ENCODE measurements at regions of chr16 and their contacts with region 1.

Region 1: GRCh38 chr16:66406534-66407221 is 20.4 kb upstream of the BEAN1 start:
- DNase-seq: peak; percentile 90
- H3K4me3 ChIP-seq: peak overlapping the region; percentile 77 to 82
- H3K27ac ChIP-seq: peak overlapping the region; percentile 56 to 60
- H3K4me1 ChIP-seq: peaks cover 6 to 15% of the 10 kb centered on the region in 2 experiments; a peak in 3 of 4 replicates
- H3K27me3 ChIP-seq: no peaks in the 10 kb centered on the region
- CTCF ChIP-seq: peak; percentile 84
- EP300 ChIP-seq: no peak
- RAD21 ChIP-seq: peak; percentile 93

Region 2: GRCh38 chr16:66391726-66392670 is 14.7 kb before region 1 on chr16:
- CTCF ChIA-PET with region 1: interaction called, 12 read pairs
- POLR2A ChIA-PET with region 1: no interaction called
- DNase-seq: no peak
- H3K4me3 ChIP-seq: no peak overlapping the region
- H3K27ac ChIP-seq: no peak overlapping the region
- H3K4me1 ChIP-seq: no peaks in the 10 kb centered on the region
- H3K27me3 ChIP-seq: no peaks in the 10 kb centered on the region
- CTCF ChIP-seq: no peak
- EP300 ChIP-seq: no peak
- RAD21 ChIP-seq: no peak

Region 3: DNA sequence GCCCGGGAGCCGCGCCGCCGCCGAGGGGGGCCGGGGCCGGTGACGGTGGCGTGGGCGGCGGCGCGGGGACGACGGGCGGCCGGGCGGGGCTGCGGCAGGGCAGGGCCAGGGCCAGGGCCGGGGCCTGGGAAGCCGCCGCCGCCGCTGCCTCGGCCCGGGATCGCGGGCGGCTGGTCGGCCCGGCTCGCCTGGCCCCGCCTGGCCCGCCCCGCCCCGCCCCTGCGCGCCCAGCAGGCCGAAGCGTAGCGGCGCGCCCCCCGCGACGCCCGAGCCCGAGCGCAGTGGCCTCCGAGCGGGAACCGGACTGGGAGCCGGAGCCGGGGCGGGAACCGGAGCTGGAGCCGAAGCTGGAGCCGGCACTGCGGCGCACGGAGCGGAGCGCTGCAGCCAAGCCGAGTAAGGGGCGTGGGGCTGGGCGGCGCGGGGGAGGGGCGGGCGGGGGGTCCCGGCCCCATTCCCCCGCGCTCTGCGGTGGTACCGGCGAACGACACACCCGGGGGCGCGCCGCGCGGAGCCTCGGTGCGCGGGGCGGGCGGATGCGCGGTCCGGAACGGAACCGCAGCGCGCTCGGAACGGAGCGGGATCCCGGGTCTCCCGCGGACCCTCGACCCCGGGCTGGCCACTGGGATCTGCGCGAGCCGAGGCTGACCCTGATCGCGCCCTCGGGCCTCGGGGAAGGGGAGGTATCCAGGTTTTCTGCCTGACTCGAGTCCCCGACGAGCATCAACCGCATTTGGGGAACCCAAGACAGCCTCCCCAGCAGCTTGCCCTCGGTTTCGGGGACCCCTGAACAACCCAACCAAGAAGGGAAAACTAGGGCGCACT is 20.6 kb after region 1 on chr16 and contains the start of gene BEAN1:
- CTCF ChIA-PET with region 1: interaction called, 28 read pairs
- POLR2A ChIA-PET with region 1: no interaction called
- DNase-seq: peak; percentile 86
- H3K4me3 ChIP-seq: peak within 1 kb of the TSS; percentile 40 to 48
- H3K27ac ChIP-seq: no peak within 1 kb of the TSS
- H3K4me1 ChIP-seq: peaks cover 0 to 11% of the 10 kb centered on the region in 2 experiments; a peak in 1 of 4 replicates
- H3K27me3 ChIP-seq: peaks cover 50% of the 10 kb centered on the region
- CTCF ChIP-seq: no peak
- EP300 ChIP-seq: no peak
- RAD21 ChIP-seq: no peak
- polyA plus RNA-seq, gene BEAN1: 0.07 TPM in 1 of 2 replicates, not detected in the other

Region 4: DNA sequence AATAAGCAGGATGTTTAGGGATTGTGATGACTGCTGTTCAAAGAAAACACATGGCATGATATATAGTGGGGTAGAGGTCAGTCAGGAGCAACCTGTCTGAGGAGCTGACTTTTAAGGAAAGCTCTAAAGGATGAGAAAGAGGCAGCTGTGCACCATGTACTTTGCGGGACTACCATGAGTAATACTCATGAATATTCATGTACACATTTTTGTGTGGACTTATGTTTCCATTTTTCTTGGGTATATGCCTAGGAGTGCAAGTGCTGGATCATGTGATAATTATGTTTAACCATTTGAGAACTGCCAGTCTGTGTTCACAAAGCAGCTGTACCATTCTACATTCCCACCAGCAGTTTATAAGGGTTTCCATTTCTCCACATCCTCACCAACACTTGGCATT is 56.2 kb after region 1 on chr16:
- CTCF ChIA-PET with region 1: interaction called, 299 read pairs
- POLR2A ChIA-PET with region 1: no interaction called
- DNase-seq: no peak
- H3K4me3 ChIP-seq: no peak overlapping the region
- H3K27ac ChIP-seq: no peak overlapping the region
- H3K4me1 ChIP-seq: no peaks in the 10 kb centered on the region; a peak in 1 of 4 replicates
- H3K27me3 ChIP-seq: peaks cover 12% of the 10 kb centered on the region; the same call in 1 of the 2 replicates
- CTCF ChIP-seq: no peak
- EP300 ChIP-seq: no peak
- RAD21 ChIP-seq: no peak

Region 5: DNA sequence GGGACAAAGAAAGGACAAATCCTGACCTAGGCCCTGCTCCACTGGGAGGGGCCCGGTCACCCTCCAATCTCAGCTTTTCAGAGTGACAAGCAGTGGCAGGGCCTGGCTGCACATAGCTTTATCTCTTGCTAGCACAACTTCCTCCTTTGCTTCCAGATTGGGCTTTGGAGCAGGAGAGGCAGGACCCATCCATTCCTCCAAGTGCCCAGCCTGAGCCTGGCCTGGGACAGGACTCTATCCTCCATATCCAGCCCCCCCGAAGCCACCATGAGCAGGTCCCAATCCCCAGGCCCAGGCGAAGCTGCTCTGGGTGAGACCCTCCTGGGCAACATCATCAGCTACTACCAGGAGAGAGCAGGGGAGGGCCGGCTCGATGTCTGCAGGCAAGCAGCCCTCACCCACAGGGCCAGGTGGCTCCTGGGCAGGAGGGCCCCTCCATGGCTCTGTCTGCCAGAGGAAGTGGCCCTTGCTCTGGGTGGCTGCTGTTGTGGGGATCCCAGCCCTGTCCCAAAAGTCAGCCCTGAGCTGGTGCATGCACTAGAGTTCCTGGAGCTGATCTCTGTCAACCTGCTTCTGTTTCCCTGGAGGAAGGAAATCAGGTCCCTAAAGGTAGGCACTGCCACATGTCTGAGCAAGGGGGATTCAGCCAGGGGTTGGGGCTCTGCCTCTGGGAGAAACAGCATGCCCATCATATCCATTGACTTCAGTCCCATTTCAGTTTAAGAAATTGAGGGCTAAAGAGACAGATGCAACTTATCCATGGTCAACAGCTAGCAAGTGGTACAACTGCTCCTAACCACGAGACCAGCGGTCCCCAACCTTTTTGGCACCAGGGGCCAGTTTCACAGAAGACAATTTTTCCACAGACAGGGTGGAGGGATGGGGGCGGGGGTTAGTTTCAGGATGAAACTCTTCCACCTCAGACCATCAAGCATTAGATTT is 84.4 kb after region 1 on chr16:
- CTCF ChIA-PET with region 1: interaction called, 299 read pairs
- POLR2A ChIA-PET with region 1: no interaction called
- DNase-seq: no peak
- H3K4me3 ChIP-seq: no peak overlapping the region
- H3K27ac ChIP-seq: no peak overlapping the region
- H3K4me1 ChIP-seq: peaks cover 10% of the 10 kb centered on the region in 2 experiments; a peak in 2 of 4 replicates
- H3K27me3 ChIP-seq: no peaks in the 10 kb centered on the region
- CTCF ChIP-seq: no peak
- EP300 ChIP-seq: no peak
- RAD21 ChIP-seq: no peak

Region 6: GRCh38 chr16:66608241-66609138 is 201.8 kb after region 1 on chr16:
- CTCF ChIA-PET with region 1: interaction called, 19 read pairs
- POLR2A ChIA-PET with region 1: interaction called, 4 read pairs
- DNase-seq: peak; percentile 94
- H3K4me3 ChIP-seq: no peak overlapping the region; a peak in 1 of 4 replicates
- H3K27ac ChIP-seq: peak overlapping the region; percentile 36 to 38; a peak in 3 of 4 replicates
- H3K4me1 ChIP-seq: peaks cover 7 to 19% of the 10 kb centered on the region in 2 experiments; a peak in 3 of 4 replicates
- H3K27me3 ChIP-seq: no peaks in the 10 kb centered on the region
- CTCF ChIP-seq: peak; percentile 94
- EP300 ChIP-seq: no peak
- RAD21 ChIP-seq: peak; percentile 72

Measured in SK-N-SH (cell line).